ENCODE measurements at regions of chr14 and their contacts with region 1.

Region 1: GRCh38 chr14:42429009-42429800 is 822.5 kb downstream of the LRFN5 start:
- DNase-seq: peak; percentile 24
- ATAC-seq: peak; percentile 95
- H3K4me3 Mint-ChIP-seq: peak overlapping the region; percentile 12
- H3K27ac Mint-ChIP-seq: peak overlapping the region; percentile 80
- H3K4me1 Mint-ChIP-seq: peaks cover 28% of the 10 kb centered on the region
- H3K27me3 Mint-ChIP-seq: no peaks in the 10 kb centered on the region
- CTCF ChIP-seq: no peak

Region 2: GRCh38 chr14:41868396-41868795 is 560.8 kb before region 1 on chr14:
- CTCF ChIA-PET with region 1: no interaction called
- POLR2A ChIA-PET with region 1: no interaction called
- intact Hi-C with region 1: no loop called
- DNase-seq: no peak
- ATAC-seq: no peak
- H3K4me3 Mint-ChIP-seq: no peak overlapping the region
- H3K27ac Mint-ChIP-seq: no peak overlapping the region
- H3K4me1 Mint-ChIP-seq: no peaks in the 10 kb centered on the region
- H3K27me3 Mint-ChIP-seq: no peaks in the 10 kb centered on the region
- CTCF ChIP-seq: no peak

Region 3: DNA sequence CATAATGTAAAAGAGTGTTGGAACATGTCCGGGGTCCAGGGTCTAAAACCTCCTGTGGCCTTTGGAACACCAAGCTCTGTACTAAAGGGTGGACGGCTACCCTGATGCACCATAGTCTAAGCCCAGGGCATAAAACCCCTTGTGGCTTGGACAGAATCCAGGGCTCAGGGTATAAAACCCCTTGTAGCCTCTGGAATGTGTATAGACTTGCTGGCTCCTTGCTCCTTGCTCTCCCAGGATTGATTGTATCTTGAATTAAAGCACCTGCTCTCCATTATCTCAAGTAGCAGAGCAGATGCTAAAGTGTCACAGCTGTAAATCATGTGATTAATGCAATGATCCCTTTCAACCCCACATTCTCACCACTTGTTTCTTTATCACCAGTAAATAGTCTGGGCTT is 266.1 kb before region 1 on chr14:
- CTCF ChIA-PET with region 1: no interaction called
- POLR2A ChIA-PET with region 1: no interaction called
- intact Hi-C with region 1: no loop called
- DNase-seq: no peak
- ATAC-seq: no peak
- H3K4me3 Mint-ChIP-seq: no peak overlapping the region
- H3K27ac Mint-ChIP-seq: no peak overlapping the region
- H3K4me1 Mint-ChIP-seq: no peaks in the 10 kb centered on the region
- H3K27me3 Mint-ChIP-seq: no peaks in the 10 kb centered on the region
- CTCF ChIP-seq: no peak

Region 4: DNA sequence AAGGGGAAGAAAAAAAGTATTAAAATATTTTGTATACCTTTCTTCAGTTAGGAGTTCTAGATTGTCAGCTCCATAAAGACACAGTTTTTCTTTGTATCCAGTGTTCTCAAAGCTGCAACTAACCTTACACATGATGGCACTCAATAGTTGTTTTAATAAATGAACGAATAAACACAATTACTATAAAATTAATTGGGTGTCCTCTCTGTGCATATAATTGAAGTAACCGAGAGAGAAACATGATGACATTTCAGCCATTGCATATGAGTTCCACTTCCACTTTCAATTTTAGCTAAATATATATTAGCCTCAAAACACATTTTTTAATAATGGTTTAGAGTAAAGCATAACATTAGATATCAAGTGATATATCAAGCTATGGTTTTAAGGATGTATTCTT is 151.4 kb before region 1 on chr14:
- CTCF ChIA-PET with region 1: no interaction called
- POLR2A ChIA-PET with region 1: no interaction called
- intact Hi-C with region 1: loop called (anchors 5 kb)
- DNase-seq: no peak
- ATAC-seq: peak; percentile 52
- H3K4me3 Mint-ChIP-seq: no peak overlapping the region
- H3K27ac Mint-ChIP-seq: no peak overlapping the region
- H3K4me1 Mint-ChIP-seq: peaks cover 18% of the 10 kb centered on the region
- H3K27me3 Mint-ChIP-seq: no peaks in the 10 kb centered on the region
- CTCF ChIP-seq: no peak

Region 5: GRCh38 chr14:42299692-42300091 is 129.5 kb before region 1 on chr14:
- CTCF ChIA-PET with region 1: no interaction called
- POLR2A ChIA-PET with region 1: no interaction called
- intact Hi-C with region 1: loop called (anchors 2 kb)
- DNase-seq: no peak
- ATAC-seq: peak; percentile 99
- H3K4me3 Mint-ChIP-seq: peak overlapping the region; percentile 39
- H3K27ac Mint-ChIP-seq: no peak overlapping the region
- H3K4me1 Mint-ChIP-seq: peaks cover 14% of the 10 kb centered on the region
- H3K27me3 Mint-ChIP-seq: no peaks in the 10 kb centered on the region
- CTCF ChIP-seq: no peak

Region 6: DNA sequence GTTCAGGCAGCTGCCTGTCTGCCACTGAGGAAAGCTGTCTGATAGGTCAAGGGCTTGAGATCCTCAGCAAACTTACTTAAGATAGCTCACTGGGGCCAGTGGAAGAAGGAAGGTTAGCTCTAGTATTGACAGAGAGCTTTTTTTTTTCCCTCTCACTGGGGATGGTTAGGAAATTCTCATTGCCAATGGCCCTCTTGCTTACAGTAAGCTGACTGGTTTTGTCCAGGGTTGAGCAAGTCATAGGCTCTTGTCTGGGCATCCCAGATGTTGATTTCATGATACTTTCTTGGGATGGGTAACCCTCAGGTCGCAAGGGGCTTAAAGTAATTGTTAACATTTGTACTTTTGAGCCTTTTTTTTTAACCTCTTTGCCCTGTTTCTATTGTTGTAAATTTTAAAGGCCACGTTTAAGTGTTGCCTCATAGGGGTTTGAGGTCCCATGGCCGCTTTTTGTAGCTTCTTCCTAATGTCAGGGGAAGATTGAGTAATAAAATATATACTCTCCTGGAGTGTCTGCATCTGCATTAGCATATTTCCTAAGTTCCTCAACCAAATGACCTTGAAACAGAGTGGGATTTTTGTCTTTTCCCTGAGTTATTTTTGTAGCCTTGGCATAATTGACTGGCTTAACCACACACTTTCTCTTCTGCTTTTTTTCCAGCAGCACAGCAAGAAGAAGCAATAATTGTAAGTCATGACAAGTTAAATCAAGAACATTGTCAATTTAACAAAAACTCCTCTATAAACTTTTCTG is 106.5 kb before region 1 on chr14:
- CTCF ChIA-PET with region 1: no interaction called
- POLR2A ChIA-PET with region 1: no interaction called
- intact Hi-C with region 1: loop called (anchors 5 kb)
- DNase-seq: no peak
- ATAC-seq: peak; percentile 31
- H3K4me3 Mint-ChIP-seq: peak overlapping the region; percentile 39
- H3K27ac Mint-ChIP-seq: peak overlapping the region; percentile 68
- H3K4me1 Mint-ChIP-seq: peaks cover 29% of the 10 kb centered on the region
- H3K27me3 Mint-ChIP-seq: no peaks in the 10 kb centered on the region
- CTCF ChIP-seq: no peak

Region 7: DNA sequence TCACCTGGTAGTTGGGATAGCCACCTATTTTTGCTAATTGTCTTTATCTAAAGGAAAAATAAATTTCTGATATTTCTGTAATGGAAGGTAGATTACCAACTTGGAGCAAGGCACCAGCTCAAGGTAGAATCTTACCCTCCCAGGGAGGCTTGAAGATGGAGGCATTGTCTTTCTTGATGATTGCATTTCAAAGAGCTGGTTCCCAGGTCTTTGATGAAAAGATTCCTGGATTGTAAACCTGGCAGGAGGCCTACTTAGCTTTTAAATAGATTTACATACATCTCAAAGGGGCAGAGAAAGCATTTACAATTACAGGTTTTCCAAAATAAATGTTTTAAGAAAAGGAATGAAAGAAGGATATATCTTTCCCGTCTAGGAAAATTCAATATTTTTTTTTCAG is 93.3 kb before region 1 on chr14:
- CTCF ChIA-PET with region 1: no interaction called
- POLR2A ChIA-PET with region 1: no interaction called
- intact Hi-C with region 1: loop called (anchors 5 kb)
- DNase-seq: no peak
- ATAC-seq: no peak
- H3K4me3 Mint-ChIP-seq: no peak overlapping the region
- H3K27ac Mint-ChIP-seq: no peak overlapping the region
- H3K4me1 Mint-ChIP-seq: peaks cover 26% of the 10 kb centered on the region
- H3K27me3 Mint-ChIP-seq: no peaks in the 10 kb centered on the region
- CTCF ChIP-seq: no peak

Region 8: DNA sequence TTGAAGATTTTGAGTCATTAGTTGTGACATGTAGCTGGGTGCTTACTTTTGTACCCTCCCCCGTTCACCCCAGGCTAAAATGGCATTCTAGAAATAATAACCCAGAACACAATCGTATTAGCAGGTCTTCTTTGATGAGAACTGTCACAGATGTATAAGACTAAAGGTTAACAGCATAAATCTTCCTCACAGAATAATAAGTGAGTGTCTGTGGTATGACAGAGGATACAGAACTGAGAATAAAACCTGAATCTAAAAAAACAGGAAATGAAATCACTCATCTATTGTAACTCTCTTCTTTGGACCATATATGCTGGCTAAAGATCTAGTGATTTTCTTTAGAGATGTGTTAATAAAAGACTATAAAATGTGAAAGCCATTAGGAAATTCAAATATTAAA is 75.9 kb before region 1 on chr14:
- CTCF ChIA-PET with region 1: no interaction called
- POLR2A ChIA-PET with region 1: no interaction called
- intact Hi-C with region 1: loop called (anchors 2 kb)
- DNase-seq: no peak
- ATAC-seq: peak; percentile 90
- H3K4me3 Mint-ChIP-seq: peak overlapping the region; percentile 53
- H3K27ac Mint-ChIP-seq: peak overlapping the region; percentile 65
- H3K4me1 Mint-ChIP-seq: peaks cover 18% of the 10 kb centered on the region
- H3K27me3 Mint-ChIP-seq: no peaks in the 10 kb centered on the region
- CTCF ChIP-seq: no peak